Dorsolateral prefrontal cortex (tissue), 120 donors: ENCODE measurements at regions of chr16 and their contacts with region 1.

Region 1: DNA sequence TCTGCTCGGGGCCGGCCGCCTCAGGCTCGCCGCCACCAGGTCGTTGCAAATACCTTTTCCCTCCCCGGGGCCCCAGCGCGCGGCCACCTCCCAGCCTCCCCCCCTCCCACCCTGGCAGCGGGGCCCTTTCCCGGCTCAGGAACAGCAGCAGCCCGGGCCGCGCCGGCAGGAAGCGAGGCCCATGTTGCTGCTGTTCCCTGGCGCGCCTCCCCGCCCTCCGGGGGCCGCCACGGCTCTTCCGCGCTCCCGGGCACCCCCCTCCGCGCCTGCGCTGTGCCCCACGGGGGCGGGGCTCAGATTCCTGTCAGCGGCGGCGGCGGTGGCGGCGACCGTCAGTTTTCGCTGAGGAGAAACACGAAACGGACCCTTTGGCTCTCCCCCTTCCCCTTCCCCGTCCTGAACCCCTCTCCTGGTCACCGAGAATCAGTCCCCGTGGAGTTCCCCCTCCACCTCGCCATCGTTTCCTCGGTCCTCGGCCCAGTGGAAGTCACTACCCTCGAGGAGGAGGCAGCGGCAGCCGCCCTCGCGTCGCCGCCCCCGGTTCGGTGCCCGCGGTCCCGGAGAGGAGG is at the start of gene NFAT5:
- DNase-seq: peak; percentile 76 to 94 (median 88)
- H3K4me3 ChIP-seq: peak within 1 kb of the TSS; percentile 69 to 98 (median 89)
- H3K27ac ChIP-seq: peak within 1 kb of the TSS; percentile 76 to 100 (median 97)
- H3K27me3 ChIP-seq: no peaks in the 10 kb centered on the region
- CTCF ChIP-seq: peak in 32 of 56 donors; percentile 4 to 42 (median 24)
- total RNA-seq, gene NFAT5: 64.4 to 123 (median 91.3) TPM

Region 2: DNA sequence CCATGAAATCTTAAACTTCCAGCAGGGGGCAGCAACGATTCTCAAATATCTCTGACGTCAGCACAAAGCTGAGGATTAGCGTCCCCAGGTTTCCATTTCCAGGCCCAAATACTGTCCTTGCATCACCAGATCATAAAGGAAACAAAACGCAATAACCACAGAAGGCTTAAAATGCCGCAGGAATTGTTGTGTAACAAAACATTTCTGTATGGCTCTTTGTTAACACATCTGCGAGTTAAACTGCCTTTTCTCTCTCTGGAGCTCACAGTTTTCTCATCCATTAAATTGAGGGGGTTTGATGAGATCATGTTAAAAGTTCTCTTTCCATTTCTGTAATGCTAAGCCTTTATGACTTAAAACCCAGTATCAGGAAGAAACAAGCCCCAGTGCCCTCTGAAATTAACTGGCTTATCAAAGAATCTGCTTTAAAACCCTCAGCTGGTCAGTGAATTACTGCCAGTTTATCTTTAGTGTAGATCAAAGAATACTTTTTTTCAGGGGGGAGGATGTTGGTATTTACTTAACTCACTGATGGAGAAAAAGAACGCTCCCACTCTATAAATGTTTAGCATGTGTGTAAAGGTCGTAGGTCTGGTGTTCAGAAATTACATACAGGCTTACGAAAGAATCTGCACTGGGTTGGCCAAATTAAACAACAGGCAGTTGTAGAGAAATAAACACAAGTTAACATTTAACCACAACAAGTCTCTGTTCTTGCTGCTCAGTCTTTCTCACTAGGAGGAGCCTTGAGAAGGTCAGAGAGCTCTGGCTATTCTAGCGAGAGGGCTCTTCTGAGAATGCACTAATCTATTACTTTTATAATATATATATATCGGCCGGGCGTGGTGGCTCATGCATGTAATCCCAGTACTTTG is 169.3 kb before region 1 on chr16:
- intact Hi-C with region 1: loop called (anchors 2 to 5 kb)
- DNase-seq: peak in 7 of 10 donors; percentile 49 to 81 (median 66)
- H3K4me3 ChIP-seq: peak overlapping the region in 23 of 59 donors; percentile 1 to 41 (median 18)
- H3K27ac ChIP-seq: peak overlapping the region; percentile 17 to 95 (median 83)
- H3K27me3 ChIP-seq: no peaks in the 10 kb centered on the region
- CTCF ChIP-seq: peak; percentile 69 to 92 (median 82)

Region 3: DNA sequence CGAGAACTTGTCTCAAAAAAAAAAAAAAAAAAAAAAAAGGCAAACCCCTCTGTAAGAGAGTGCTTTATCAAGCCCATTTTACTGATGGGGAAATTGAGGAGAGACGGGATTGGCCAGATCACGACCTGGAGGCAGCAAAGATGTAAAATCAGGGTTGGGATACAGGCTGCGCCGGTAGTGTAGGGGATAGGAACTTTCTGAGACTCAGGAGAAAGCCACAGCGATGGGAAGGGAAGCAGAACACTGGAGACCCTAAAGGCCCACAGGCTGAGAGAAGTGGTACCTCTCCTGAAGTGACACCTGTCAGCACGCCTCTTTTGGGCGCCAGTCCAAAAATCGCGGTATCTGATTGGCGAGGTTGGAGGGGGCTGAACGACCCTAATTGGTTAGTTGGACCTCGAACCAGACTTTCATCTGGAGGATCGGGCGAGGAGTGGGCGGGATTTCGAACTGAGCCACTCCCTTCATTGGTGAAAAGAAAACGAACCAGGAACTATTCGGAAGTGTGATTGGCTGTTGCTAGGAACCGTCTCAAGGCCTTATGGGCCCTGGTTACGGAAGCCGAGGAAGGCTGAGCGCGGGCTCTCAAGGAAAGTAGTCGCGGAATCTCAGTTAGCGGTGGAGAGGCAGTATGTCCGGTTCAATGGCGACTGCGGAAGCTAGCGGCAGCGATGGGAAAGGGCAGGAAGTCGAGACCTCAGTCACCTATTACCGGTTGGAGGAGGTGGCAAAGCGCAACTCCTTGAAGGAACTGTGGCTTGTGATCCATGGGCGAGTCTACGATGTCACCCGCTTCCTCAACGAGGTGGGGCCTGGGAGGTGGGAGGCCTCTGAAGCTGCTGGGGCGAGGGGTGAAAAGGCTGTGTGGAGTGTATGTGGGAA is 141.5 kb before region 1 on chr16 and contains the start of gene CYB5B:
- intact Hi-C with region 1: loop called in 1 of 2 experiments (anchors 10 kb)
- DNase-seq: peak; percentile 80 to 97 (median 94)
- H3K4me3 ChIP-seq: peak within 1 kb of the TSS; percentile 47 to 97 (median 85)
- H3K27ac ChIP-seq: peak within 1 kb of the TSS in 58 of 59 donors; percentile 22 to 90 (median 77)
- H3K27me3 ChIP-seq: no peaks in the 10 kb centered on the region
- CTCF ChIP-seq: peak in 23 of 56 donors; percentile 8 to 48 (median 19)
- total RNA-seq, gene CYB5B: 79.7 to 179 (median 108) TPM

Region 4: DNA sequence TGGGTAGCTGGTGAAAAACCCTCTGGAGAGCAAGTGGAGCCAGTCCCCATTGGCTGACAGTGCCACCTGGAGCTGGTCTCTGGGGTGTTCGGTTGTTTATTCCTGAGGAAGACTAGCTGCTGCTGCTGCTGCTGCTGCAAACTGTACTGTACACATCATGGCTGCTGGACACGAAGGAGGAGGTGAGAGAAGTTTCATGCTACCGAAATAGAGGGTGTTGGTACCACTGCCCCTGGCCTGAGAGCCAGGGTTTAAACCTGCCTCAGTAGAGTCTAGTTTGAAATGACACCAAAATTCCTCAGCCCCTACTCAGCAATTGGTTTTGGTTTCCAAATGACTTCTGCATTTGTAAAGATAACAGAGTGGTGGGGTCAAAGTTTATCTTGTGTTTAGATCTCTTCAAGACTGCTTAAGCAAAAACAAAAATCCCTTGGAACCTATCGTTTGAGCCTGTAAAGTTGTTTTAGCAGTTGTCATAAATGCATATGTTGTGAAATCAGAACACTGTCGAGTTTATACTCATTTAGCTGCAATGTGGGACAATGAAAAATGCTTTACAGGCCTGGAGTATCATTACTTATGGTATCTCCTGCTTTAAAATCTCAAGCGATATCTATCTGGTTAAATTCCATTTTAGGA is 100.6 kb before region 1 on chr16:
- intact Hi-C with region 1: loop called in 1 of 2 experiments (anchors 10 kb)
- DNase-seq: peak in 1 of 10 donors; percentile 34
- H3K4me3 ChIP-seq: peak overlapping the region in 11 of 59 donors; percentile 1 to 46 (median 16)
- H3K27ac ChIP-seq: peak overlapping the region in 52 of 59 donors; percentile 5 to 79 (median 54)
- H3K27me3 ChIP-seq: no peaks in the 10 kb centered on the region
- CTCF ChIP-seq: peak in 2 of 56 donors; percentile 9 to 38

Region 5: DNA sequence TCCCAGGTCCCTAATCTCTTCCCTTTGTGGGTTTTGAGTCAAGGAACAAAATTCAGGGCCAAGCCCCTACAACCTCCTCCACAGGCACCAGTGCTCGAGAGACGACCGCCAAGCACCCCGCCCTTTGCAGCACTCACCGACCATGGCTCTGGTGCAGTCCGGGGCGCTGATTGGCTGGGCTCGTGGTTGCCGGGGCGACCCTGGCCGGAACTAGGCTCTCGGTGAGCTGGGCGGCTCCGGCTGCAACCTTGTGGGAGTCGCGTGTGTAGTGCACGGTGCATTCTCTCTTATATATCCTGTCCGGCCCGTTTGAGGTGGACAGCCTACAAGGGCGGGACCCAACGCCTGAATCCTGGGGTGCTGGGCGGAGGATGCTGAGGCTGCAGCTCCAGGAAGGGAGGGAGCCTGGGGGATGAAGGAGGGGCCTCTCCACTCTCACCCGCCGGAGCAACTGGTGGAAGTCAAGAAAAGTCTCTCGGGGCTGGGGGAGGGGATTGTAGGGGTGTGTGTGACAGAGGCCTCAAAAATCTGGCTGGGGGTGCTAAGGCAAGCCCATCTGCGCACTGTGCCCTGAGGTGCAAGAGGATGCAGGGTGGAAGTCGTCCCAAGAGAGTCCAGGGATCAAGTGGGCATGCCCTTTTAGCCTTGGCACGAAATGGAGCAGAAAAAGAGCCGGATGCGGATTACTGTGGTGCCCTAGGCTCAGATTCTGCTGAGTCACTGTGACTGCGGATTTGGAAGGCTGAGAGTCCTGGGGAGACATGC is 160.7 kb after region 1 on chr16 and contains the start of gene NQO1:
- intact Hi-C with region 1: loop called in 1 of 2 experiments (anchors 10 kb)
- DNase-seq: peak; percentile 82 to 95 (median 93)
- H3K4me3 ChIP-seq: peak within 1 kb of the TSS; percentile 39 to 83 (median 71)
- H3K27ac ChIP-seq: peak within 1 kb of the TSS; percentile 65 to 94 (median 87)
- H3K27me3 ChIP-seq: no peaks in the 10 kb centered on the region
- CTCF ChIP-seq: peak in 6 of 56 donors; percentile 8 to 25 (median 15)
- total RNA-seq, gene NQO1: 10.2 to 114 (median 28.6) TPM

Region 6: GRCh38 chr16:69754469-69755310 is 188.9 kb after region 1 on chr16 and contains the start of gene NOB1:
- intact Hi-C with region 1: loop called in 1 of 2 experiments (anchors 5 kb)
- DNase-seq: peak; percentile 92 to 97 (median 96)
- H3K4me3 ChIP-seq: peak within 1 kb of the TSS; percentile 52 to 100 (median 90)
- H3K27ac ChIP-seq: peak within 1 kb of the TSS in 54 of 59 donors; percentile 27 to 95 (median 72)
- H3K27me3 ChIP-seq: no peaks in the 10 kb centered on the region
- CTCF ChIP-seq: peak; percentile 96 to 100 (median 99)
- total RNA-seq, gene NOB1: 19.8 to 37.5 (median 27.3) TPM